ENCODE measurements at regions of chr4 and their contacts with region 1.

Region 1: DNA sequence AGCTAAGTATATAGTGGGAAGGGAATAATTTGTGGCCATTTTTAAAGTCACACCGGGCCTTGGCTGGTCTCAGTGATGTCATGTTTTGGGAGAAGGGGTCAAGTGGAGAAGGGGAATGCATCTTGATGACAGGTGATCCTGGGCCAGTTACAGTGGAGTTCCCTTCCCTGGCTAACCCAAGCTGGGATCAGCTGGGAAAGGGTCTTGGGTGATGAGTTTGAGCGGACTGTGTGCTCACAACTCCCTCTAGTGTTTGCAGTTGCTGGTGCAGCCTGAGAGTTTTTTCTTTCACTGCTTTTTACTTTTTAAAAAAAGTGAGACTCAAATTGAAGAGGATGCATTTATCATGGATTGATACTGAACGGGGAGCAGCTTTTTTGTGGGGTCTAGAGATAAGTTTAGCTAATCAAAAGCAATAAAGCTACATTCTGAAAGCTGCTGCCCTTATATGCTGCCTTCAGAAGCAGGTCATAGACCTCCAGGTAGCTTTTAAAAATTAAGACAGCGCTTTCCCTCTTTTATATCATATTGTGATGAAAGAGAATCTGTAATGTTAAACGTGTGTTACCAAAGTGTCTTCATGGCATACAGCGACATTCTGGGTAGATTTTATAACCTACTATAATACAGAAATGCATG is 164.7 kb downstream of the DCLK2 start:
- H3K4me3 ChIP-seq: no peak overlapping the region
- H3K27ac ChIP-seq: no peak overlapping the region
- H3K4me1 ChIP-seq: peaks cover 7% of the 10 kb centered on the region; the same call in 1 of the 2 replicates
- CTCF ChIP-seq: no peak

Region 2: GRCh38 chr4:149999485-150000074 is 243.4 kb before region 1 on chr4:
- CTCF ChIA-PET with region 1: interaction called, 20 read pairs
- POLR2A ChIA-PET with region 1: no interaction called
- H3K4me3 ChIP-seq: no peak overlapping the region
- H3K27ac ChIP-seq: no peak overlapping the region
- H3K4me1 ChIP-seq: no peaks in the 10 kb centered on the region; the same call in 1 of the 2 replicates
- CTCF ChIP-seq: 0 out of 2 replicates have a peak, but pooled peaks have one; percentile 37

Region 3: DNA sequence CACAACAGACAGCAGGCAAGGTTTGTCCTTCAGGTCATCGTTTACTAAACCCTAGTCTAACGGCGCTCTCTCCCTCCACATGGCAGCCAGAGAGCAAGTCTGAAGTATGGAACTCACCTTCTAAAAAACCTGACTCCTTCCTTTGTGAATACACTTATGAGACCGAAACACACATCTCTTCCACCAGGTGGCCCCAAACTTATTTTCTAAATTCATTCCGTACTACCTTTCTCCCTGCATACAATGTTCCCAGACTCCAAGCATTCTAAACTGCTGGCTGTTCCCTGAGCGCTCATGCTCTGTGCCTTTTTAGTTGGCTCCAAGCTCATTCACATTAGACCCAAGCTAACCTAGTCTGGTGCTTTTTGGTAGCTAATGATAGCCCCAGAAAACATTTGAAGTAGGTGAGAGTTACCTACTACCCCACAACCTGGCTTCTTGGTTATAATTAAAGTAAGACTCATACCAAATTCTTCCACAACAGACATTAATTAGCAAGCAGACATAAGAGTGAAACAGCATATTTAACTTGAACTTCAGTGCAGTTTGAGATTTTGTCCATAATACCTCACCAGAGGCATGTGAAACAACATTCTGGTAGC is 232.3 kb before region 1 on chr4:
- CTCF ChIA-PET with region 1: interaction called, 44 read pairs
- POLR2A ChIA-PET with region 1: no interaction called
- H3K4me3 ChIP-seq: no peak overlapping the region
- H3K27ac ChIP-seq: no peak overlapping the region
- H3K4me1 ChIP-seq: peaks cover 7% of the 10 kb centered on the region; the same call in 1 of the 2 replicates
- CTCF ChIP-seq: peak; percentile 35; the same call in 1 of the 2 replicates

Region 4: GRCh38 chr4:150501009-150501727 is 258.2 kb after region 1 on chr4:
- CTCF ChIA-PET with region 1: no interaction called
- POLR2A ChIA-PET with region 1: no interaction called
- H3K4me3 ChIP-seq: no peak overlapping the region
- H3K27ac ChIP-seq: no peak overlapping the region
- H3K4me1 ChIP-seq: no peaks in the 10 kb centered on the region
- CTCF ChIP-seq: no peak